ENCODE measurements at regions of chr1 and their contacts with region 1.

Region 1: DNA sequence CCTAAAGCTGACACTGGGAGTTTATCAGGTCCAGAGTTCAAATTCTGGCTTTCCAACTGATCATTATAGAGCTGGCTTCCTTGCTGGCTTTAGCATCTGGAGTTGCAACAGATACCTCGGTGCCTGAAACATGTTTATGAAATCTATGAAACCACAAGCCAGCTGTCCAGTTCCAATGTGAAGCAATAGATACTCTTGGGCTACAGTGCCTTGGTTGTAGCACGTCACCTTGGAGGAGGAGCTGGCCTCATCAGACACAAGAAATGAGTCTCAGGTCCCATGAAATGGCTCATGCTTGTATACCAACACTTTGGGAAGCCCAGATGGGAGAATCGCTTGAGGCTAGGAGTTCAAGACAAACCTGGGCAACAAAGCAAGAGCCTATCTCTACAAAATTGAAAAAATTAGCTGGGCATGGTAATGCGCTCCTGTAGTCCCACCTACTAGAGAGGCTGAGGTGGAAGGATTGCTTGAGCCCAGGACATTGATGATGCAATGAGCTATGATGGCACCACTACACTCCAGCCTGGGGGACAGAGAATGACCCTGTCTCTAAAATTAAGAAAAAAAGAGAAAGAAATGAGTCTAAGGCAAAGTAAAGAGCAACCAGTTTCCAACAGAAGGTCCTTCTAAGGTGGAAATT is 132.5 kb upstream of the ZNF648 start:
- DNase-seq: peak; percentile 66 to 79
- ATAC-seq: peak; percentile 77 to 93 (median 80)
- H3K4me3 ChIP-seq: no peak overlapping the region
- H3K27ac ChIP-seq: no peak overlapping the region
- H3K4me1 ChIP-seq: peaks cover 31% of the 10 kb centered on the region
- H3K27me3 ChIP-seq: no peaks in the 10 kb centered on the region
- CTCF ChIP-seq: no peak

Region 2: GRCh38 chr1:182143154-182143657 is 50.8 kb before region 1 on chr1:
- intact Hi-C with region 1: loop called (anchors 5 kb)
- DNase-seq: peak; percentile 94 to 96
- ATAC-seq: peak; percentile 72 to 86 (median 82)
- H3K4me3 ChIP-seq: no peak overlapping the region
- H3K27ac ChIP-seq: peak overlapping the region; percentile 87
- H3K4me1 ChIP-seq: peaks cover 32% of the 10 kb centered on the region
- H3K27me3 ChIP-seq: no peaks in the 10 kb centered on the region
- CTCF ChIP-seq: peak; percentile 97

Region 3: GRCh38 chr1:182149411-182149965 is 44.5 kb before region 1 on chr1:
- intact Hi-C with region 1: loop called (anchors 5 kb)
- DNase-seq: peak in 1 of 2 donors; percentile 34
- ATAC-seq: peak; percentile 40 to 57 (median 54)
- H3K4me3 ChIP-seq: no peak overlapping the region
- H3K27ac ChIP-seq: no peak overlapping the region
- H3K4me1 ChIP-seq: peaks cover 16% of the 10 kb centered on the region
- H3K27me3 ChIP-seq: no peaks in the 10 kb centered on the region
- CTCF ChIP-seq: no peak

Measured in psoas muscle (tissue), 8 donors.